A673 (cell line): ENCODE measurements at regions of chr18 and their contacts with region 1.

Region 1: GRCh38 chr18:31555971-31556747 is 35.5 kb upstream of the TTR start:
- DNase-seq: peak; percentile 68
- H3K4me3 ChIP-seq: no peak overlapping the region
- H3K27ac ChIP-seq: no peak overlapping the region
- H3K4me1 ChIP-seq: no peaks in the 10 kb centered on the region
- H3K27me3 ChIP-seq: peaks cover under 1% of the 10 kb centered on the region
- CTCF ChIP-seq: peak; percentile 82

Region 2: GRCh38 chr18:31469629-31470028 is 86.5 kb before region 1 on chr18:
- CTCF ChIA-PET with region 1: no interaction called
- POLR2A ChIA-PET with region 1: no interaction called
- intact Hi-C with region 1: no loop called
- DNase-seq: no peak
- H3K4me3 ChIP-seq: no peak overlapping the region
- H3K27ac ChIP-seq: no peak overlapping the region
- H3K4me1 ChIP-seq: no peaks in the 10 kb centered on the region
- H3K27me3 ChIP-seq: peaks cover 28% of the 10 kb centered on the region
- CTCF ChIP-seq: no peak

Region 3: GRCh38 chr18:31722369-31722957 is 166.3 kb after region 1 on chr18:
- CTCF ChIA-PET with region 1: interaction called, 6 read pairs
- POLR2A ChIA-PET with region 1: no interaction called
- intact Hi-C with region 1: loop called (anchors 1 kb)
- DNase-seq: peak; percentile 84
- H3K4me3 ChIP-seq: no peak overlapping the region
- H3K27ac ChIP-seq: no peak overlapping the region
- H3K4me1 ChIP-seq: no peaks in the 10 kb centered on the region
- H3K27me3 ChIP-seq: peaks cover 38% of the 10 kb centered on the region
- CTCF ChIP-seq: peak; percentile 86

Region 4: DNA sequence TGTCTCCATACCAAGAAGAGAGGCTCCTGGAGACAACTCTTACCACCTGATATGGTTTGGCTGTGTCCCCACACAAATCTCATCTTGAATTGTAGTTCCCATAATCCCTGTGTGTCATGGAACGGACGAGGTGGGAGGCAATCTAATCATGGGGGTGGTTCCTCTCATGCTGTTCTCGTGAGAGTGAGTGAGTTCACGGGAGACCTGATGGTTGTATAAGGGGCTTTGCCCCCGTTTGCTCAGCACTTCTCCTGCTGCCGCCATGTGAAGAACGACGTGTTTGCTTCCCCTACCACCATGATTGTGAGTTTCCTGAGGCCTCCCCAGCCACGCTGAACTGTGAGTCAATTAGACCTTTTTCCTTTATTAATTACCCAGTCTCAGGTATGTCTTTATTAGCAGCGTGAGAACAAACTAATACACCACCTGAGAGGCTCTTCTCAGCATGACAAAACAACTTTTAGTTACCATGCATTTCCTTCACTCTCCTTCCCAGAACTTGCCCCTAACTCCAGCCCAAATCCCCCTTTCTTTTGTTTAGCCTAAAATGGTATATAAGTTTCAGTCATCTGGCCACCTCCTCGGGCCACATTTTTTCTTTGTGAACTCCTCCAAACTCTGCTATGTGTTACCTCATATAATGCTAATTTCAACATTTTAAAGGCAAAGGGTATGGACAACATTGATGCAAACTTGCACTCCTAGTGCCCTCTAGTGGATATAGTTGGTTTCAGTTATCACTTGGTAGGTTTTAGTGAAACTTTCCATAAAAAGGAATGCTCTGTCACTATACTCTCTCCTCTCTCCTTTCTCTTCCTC is 263.2 kb after region 1 on chr18:
- CTCF ChIA-PET with region 1: no interaction called
- POLR2A ChIA-PET with region 1: no interaction called
- intact Hi-C with region 1: loop called (anchors 2 kb)
- DNase-seq: peak; percentile 68
- H3K4me3 ChIP-seq: no peak overlapping the region
- H3K27ac ChIP-seq: no peak overlapping the region
- H3K4me1 ChIP-seq: no peaks in the 10 kb centered on the region
- H3K27me3 ChIP-seq: peaks cover 1% of the 10 kb centered on the region
- CTCF ChIP-seq: peak; percentile 80

Region 5: GRCh38 chr18:31957728-31958127 is 401.6 kb after region 1 on chr18:
- CTCF ChIA-PET with region 1: interaction called, 4 read pairs
- POLR2A ChIA-PET with region 1: no interaction called
- intact Hi-C with region 1: loop called (anchors 5 kb)
- DNase-seq: no peak
- H3K4me3 ChIP-seq: no peak overlapping the region
- H3K27ac ChIP-seq: no peak overlapping the region
- H3K4me1 ChIP-seq: no peaks in the 10 kb centered on the region
- H3K27me3 ChIP-seq: no peaks in the 10 kb centered on the region
- CTCF ChIP-seq: no peak

Region 6: DNA sequence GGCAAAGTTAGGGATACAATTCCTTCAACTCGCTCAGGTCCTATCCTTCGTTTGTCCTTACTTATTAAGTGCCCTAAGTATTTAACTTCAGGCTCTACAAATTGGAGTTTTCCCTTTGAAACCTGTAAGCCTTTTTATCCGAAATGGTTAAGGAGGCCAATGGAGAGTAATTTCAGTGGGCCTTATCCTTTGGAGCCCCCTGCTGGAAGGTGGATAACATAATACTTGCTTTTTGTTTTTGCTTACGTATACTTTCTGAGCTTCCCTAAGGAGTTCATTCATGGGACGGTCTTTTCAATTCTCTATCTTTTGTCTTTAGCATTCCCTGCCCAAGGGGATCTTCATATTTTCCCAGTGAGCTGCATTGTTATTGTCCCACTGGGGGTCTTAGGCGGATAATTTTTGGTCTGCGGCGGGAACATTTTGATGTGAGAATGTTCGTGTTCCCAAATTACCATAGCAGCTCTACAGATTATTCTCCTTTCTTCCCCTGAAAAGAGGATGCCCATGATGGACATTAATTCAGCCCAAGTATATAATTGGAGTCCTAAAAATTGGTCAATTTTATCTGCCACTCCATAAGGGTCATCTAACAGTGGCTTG is 421.2 kb after region 1 on chr18:
- CTCF ChIA-PET with region 1: interaction called, 8 read pairs
- POLR2A ChIA-PET with region 1: no interaction called
- intact Hi-C with region 1: loop called (anchors 1 kb)
- DNase-seq: peak; percentile 83
- H3K4me3 ChIP-seq: no peak overlapping the region
- H3K27ac ChIP-seq: no peak overlapping the region
- H3K4me1 ChIP-seq: no peaks in the 10 kb centered on the region
- H3K27me3 ChIP-seq: no peaks in the 10 kb centered on the region
- CTCF ChIP-seq: peak; percentile 78